ENCODE measurements at regions of chr10 and their contacts with region 1.

Region 1: DNA sequence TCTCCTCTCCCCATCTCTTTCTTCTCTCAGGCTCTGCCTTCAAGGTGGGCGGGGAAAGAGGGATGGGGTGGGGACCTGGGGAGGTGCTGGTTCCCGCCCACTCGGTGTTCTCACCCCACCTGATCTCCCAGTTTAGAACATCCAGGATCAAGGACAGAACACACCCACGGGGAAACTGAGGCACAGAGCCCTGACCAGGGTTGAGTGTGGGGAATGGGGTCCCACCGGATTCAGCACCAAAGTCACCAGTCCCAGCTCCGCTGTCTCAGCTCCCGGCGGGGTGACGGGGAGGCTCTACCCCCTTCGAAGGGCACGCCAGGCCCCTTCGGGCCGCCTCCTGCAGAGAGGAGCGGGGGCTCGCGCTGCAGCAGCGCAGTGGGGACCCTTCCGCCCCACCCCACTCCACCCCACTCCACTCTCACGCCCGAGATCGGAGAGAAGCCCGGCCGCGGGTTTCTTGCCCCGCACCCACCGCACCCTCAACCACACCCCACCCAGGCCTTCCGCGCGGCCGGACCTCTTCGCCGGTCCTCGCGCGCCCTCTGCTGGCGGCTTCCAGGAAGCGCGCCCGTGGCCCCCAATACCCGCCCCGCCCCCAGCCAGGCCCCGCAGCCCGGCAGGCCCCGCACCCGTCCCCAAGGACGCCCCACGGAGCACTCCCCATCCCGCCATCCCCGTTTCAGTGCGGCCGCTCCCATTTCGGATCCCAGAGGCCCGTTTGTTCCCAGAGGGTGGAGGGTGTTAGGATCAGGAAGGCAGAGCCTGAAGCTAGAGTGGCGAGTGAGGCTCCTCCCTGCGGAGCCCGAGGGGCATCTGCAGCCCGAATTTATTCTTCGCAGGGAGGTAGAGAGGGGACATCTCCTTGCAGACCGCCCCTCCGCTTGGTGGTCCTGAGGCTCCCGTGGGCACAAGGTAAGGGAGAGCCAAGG is 18.0 kb downstream of the POLL start:
- DNase-seq: peak; percentile 66 to 84
- H3K4me3 ChIP-seq: peak overlapping the region; percentile 58
- H3K4me3 Mint-ChIP-seq: peak overlapping the region; percentile 81
- H3K27ac Mint-ChIP-seq: no peak overlapping the region
- H3K4me1 ChIP-seq: peaks cover 6% of the 10 kb centered on the region; the same call in 1 of the 2 replicates
- H3K4me1 Mint-ChIP-seq: no peaks in the 10 kb centered on the region
- H3K27me3 ChIP-seq: no peaks in the 10 kb centered on the region
- H3K27me3 Mint-ChIP-seq: peaks cover 7% of the 10 kb centered on the region
- CTCF ChIP-seq: peak; percentile 81 to 96

Region 2: GRCh38 chr10:101214446-101215396 is 355.4 kb before region 1 on chr10:
- CTCF ChIA-PET with region 1: interaction called, 16 read pairs
- POLR2A ChIA-PET with region 1: no interaction called
- intact Hi-C with region 1: loop called (anchors 1 kb)
- DNase-seq: peak; percentile 75 to 85
- H3K4me3 ChIP-seq: peak overlapping the region; percentile 42
- H3K4me3 Mint-ChIP-seq: peak overlapping the region; percentile 81
- H3K27ac Mint-ChIP-seq: no peak overlapping the region
- H3K4me1 ChIP-seq: peaks cover 9% of the 10 kb centered on the region; the same call in 1 of the 2 replicates
- H3K4me1 Mint-ChIP-seq: peaks cover 6% of the 10 kb centered on the region
- H3K27me3 ChIP-seq: peaks cover 1% of the 10 kb centered on the region; the same call in 1 of the 2 replicates
- H3K27me3 Mint-ChIP-seq: peaks cover 25% of the 10 kb centered on the region
- CTCF ChIP-seq: peak; percentile 93 to 98

Region 3: GRCh38 chr10:101297901-101298486 is 272.1 kb before region 1 on chr10:
- CTCF ChIA-PET with region 1: interaction called, 21 read pairs
- POLR2A ChIA-PET with region 1: no interaction called
- intact Hi-C with region 1: loop called (anchors 5 kb)
- DNase-seq: peak; percentile 66 to 82
- H3K4me3 ChIP-seq: no peak overlapping the region
- H3K4me3 Mint-ChIP-seq: no peak overlapping the region
- H3K27ac Mint-ChIP-seq: no peak overlapping the region
- H3K4me1 ChIP-seq: no peaks in the 10 kb centered on the region
- H3K4me1 Mint-ChIP-seq: peaks cover 6% of the 10 kb centered on the region
- H3K27me3 ChIP-seq: peaks cover 3% of the 10 kb centered on the region
- H3K27me3 Mint-ChIP-seq: peaks cover 32% of the 10 kb centered on the region
- CTCF ChIP-seq: peak; percentile 88 to 95

Region 4: DNA sequence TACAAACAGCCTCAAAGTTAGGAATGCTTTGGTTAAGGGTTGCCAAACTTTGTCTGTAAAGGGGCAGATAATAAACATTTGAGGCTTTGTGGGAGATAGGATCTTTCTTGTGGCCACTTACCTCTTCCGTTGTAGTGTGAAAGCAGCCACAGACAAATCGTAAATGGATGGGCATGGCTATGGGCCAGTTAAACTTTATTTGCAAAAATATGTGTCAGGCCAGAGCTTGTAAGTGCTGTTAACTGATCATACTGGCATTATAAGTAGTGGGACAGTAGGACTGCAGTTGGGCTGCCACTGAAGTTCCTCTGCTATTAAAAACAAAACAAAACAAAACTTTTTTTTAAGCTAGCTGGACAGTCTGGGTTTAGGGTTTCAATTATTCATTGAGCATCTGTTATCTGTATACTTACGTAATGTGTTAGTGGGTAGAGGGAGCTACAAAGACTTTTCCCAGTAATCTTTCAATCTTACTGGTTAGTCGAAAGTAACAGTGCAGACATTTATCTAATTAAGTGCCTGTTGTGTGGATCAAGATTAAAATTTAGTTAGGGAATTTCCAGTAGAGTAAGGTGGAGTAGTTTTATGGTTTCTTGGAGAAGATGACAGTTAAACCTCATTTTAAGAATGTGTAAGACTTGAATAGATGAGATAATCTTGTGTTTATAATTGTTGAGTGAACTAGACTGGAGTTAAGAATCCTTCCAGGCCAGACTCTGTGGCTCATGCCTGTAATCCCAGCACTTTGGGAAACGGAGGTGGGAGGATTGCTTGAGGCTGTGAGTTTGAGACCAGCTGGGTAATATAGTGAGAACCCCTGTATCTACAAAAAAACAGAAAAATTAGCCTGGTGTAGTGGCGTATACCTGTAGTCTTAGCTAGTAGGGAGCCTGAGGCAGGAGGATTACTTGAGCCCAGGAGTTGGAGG is 116.0 kb before region 1 on chr10:
- CTCF ChIA-PET with region 1: no interaction called
- POLR2A ChIA-PET with region 1: no interaction called
- intact Hi-C with region 1: no loop called
- DNase-seq: no peak
- H3K4me3 ChIP-seq: no peak overlapping the region
- H3K4me3 Mint-ChIP-seq: no peak overlapping the region
- H3K27ac Mint-ChIP-seq: no peak overlapping the region
- H3K4me1 ChIP-seq: no peaks in the 10 kb centered on the region
- H3K4me1 Mint-ChIP-seq: peaks cover 6% of the 10 kb centered on the region
- H3K27me3 ChIP-seq: no peaks in the 10 kb centered on the region
- H3K27me3 Mint-ChIP-seq: no peaks in the 10 kb centered on the region
- CTCF ChIP-seq: no peak

Region 5: DNA sequence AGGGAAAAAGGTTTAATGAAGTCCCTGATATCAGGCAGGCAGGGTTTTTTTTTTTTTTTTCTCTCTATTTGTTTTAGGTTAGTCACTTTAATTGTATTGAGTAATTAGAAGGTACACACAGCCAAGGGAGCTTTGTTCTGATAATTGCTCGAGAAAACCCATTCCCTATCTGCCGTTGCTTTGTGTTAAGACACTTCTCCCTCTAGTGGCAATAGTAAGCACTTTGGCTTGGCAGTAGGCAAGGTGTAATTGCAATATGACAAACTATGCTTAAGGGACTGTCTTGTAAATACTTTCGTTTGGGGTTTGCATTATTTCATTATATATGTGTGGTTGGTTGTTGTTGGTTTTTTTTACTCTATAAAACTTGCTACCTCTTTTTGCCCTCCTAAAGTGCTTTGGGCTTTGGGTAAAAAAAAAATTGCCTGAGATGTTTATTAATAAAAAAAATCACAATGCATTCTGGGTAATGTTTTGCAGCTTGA is 102.8 kb before region 1 on chr10:
- CTCF ChIA-PET with region 1: interaction called, 19 read pairs
- POLR2A ChIA-PET with region 1: no interaction called
- intact Hi-C with region 1: no loop called
- DNase-seq: peak; percentile 51 to 56
- H3K4me3 ChIP-seq: no peak overlapping the region
- H3K4me3 Mint-ChIP-seq: no peak overlapping the region
- H3K27ac Mint-ChIP-seq: no peak overlapping the region
- H3K4me1 ChIP-seq: no peaks in the 10 kb centered on the region
- H3K4me1 Mint-ChIP-seq: no peaks in the 10 kb centered on the region
- H3K27me3 ChIP-seq: no peaks in the 10 kb centered on the region
- H3K27me3 Mint-ChIP-seq: no peaks in the 10 kb centered on the region
- CTCF ChIP-seq: peak; percentile 84 to 90

Region 6: DNA sequence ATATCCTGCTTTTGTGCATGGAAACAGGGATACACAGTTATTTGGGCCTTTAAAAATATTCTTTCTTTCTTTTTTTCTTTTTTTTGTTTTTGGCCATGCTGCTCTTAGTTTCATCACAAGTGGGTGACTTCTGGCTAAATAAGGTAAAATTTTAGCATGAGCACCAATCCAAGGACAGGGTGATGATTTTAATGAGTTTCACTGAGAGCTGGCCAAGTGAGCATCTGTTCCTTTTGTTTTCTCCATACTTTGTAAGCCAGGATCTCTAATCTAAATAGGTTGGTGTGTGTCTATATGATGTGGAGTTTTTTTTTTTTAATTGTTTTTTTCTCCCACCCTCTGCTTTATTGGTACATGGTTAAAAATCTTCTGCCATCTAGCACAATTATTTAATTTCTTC is 88.8 kb before region 1 on chr10:
- CTCF ChIA-PET with region 1: no interaction called
- POLR2A ChIA-PET with region 1: no interaction called
- intact Hi-C with region 1: no loop called
- DNase-seq: no peak
- H3K4me3 ChIP-seq: no peak overlapping the region
- H3K4me3 Mint-ChIP-seq: no peak overlapping the region
- H3K27ac Mint-ChIP-seq: no peak overlapping the region
- H3K4me1 ChIP-seq: no peaks in the 10 kb centered on the region
- H3K4me1 Mint-ChIP-seq: no peaks in the 10 kb centered on the region
- H3K27me3 ChIP-seq: no peaks in the 10 kb centered on the region
- H3K27me3 Mint-ChIP-seq: no peaks in the 10 kb centered on the region
- CTCF ChIP-seq: no peak

Region 7: DNA sequence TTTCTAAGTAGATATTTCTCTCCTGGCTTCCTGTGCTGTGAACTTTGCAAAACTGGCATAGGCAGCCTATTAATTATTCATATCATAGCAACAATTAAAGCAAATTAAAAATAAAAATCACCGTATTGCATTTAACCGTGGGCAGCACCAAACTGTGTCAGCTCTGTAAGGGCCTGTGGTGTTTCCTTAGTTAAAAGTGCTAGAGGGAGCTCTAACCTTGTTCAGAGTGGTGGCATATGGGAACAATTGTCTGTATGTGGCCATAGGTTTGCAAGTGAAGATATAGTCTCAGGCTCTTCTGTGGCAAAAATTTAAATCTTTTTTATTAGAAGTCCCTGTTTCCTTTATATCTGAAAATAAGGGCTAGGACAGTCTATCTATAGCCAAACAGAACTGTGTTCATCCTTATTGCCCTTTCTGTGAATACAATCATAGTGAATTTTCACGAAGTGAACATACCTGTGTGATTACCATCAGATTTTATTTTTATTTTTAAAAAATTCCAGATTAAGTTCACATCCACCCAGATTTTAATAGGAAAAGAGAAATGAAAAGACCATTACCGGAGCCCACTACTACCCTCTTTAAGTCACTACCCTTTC is 74.7 kb before region 1 on chr10:
- CTCF ChIA-PET with region 1: interaction called, 19 read pairs
- POLR2A ChIA-PET with region 1: no interaction called
- intact Hi-C with region 1: loop called (anchors 1 kb)
- DNase-seq: peak in 1 of 2 experiments; percentile 26
- H3K4me3 ChIP-seq: no peak overlapping the region
- H3K4me3 Mint-ChIP-seq: no peak overlapping the region
- H3K27ac Mint-ChIP-seq: no peak overlapping the region
- H3K4me1 ChIP-seq: peaks cover 10% of the 10 kb centered on the region; the same call in 1 of the 2 replicates
- H3K4me1 Mint-ChIP-seq: peaks cover 6% of the 10 kb centered on the region
- H3K27me3 ChIP-seq: no peaks in the 10 kb centered on the region
- H3K27me3 Mint-ChIP-seq: no peaks in the 10 kb centered on the region
- CTCF ChIP-seq: peak; percentile 62

Region 8: GRCh38 chr10:101558202-101558601 is 11.9 kb before region 1 on chr10:
- CTCF ChIA-PET with region 1: no interaction called
- POLR2A ChIA-PET with region 1: no interaction called
- intact Hi-C with region 1: no loop called
- DNase-seq: no peak
- H3K4me3 ChIP-seq: no peak overlapping the region
- H3K4me3 Mint-ChIP-seq: no peak overlapping the region
- H3K27ac Mint-ChIP-seq: no peak overlapping the region
- H3K4me1 ChIP-seq: no peaks in the 10 kb centered on the region
- H3K4me1 Mint-ChIP-seq: no peaks in the 10 kb centered on the region
- H3K27me3 ChIP-seq: no peaks in the 10 kb centered on the region
- H3K27me3 Mint-ChIP-seq: no peaks in the 10 kb centered on the region
- CTCF ChIP-seq: no peak

Region 9: GRCh38 chr10:101595591-101596433 is 25.7 kb after region 1 on chr10:
- CTCF ChIA-PET with region 1: no interaction called
- POLR2A ChIA-PET with region 1: no interaction called
- intact Hi-C with region 1: no loop called
- DNase-seq: no peak
- H3K4me3 ChIP-seq: no peak overlapping the region
- H3K4me3 Mint-ChIP-seq: no peak overlapping the region
- H3K27ac Mint-ChIP-seq: no peak overlapping the region
- H3K4me1 ChIP-seq: no peaks in the 10 kb centered on the region
- H3K4me1 Mint-ChIP-seq: no peaks in the 10 kb centered on the region
- H3K27me3 ChIP-seq: no peaks in the 10 kb centered on the region
- H3K27me3 Mint-ChIP-seq: no peaks in the 10 kb centered on the region
- CTCF ChIP-seq: no peak